CD8-positive, alpha-beta T cell (primary cell): ENCODE measurements at regions of chr6 and their contacts with region 1.

Region 1: GRCh38 chr6:125995972-125996580 is 9.7 kb downstream of the TRMT11 start:
- DNase-seq: peak; percentile 22 to 84 (median 69)
- ATAC-seq: peak; percentile 100
- H3K4me3 ChIP-seq: peak overlapping the region in 1 of 2 experiments; percentile 16
- H3K4me3 Mint-ChIP-seq: peak overlapping the region; percentile 76
- H3K27ac ChIP-seq: no peak overlapping the region
- H3K27ac Mint-ChIP-seq: no peak overlapping the region
- H3K4me1 ChIP-seq: no peaks in the 10 kb centered on the region
- H3K4me1 Mint-ChIP-seq: peaks cover 27% of the 10 kb centered on the region
- H3K27me3 ChIP-seq: no peaks in the 10 kb centered on the region
- H3K27me3 Mint-ChIP-seq: no peaks in the 10 kb centered on the region
- CTCF ChIP-seq: peak; percentile 99

Region 2: GRCh38 chr6:126170978-126171382 is 174.9 kb after region 1 on chr6:
- CTCF ChIA-PET with region 1: interaction called, 3 read pairs
- POLR2A ChIA-PET with region 1: no interaction called
- intact Hi-C with region 1: loop called (anchors 1 to 10 kb)
- DNase-seq: peak in 2 of 9 experiments; percentile 25 to 39
- ATAC-seq: no peak
- H3K4me3 ChIP-seq: no peak overlapping the region
- H3K4me3 Mint-ChIP-seq: no peak overlapping the region
- H3K27ac ChIP-seq: no peak overlapping the region
- H3K27ac Mint-ChIP-seq: no peak overlapping the region
- H3K4me1 ChIP-seq: no peaks in the 10 kb centered on the region
- H3K4me1 Mint-ChIP-seq: peaks cover 5% of the 10 kb centered on the region
- H3K27me3 ChIP-seq: no peaks in the 10 kb centered on the region
- H3K27me3 Mint-ChIP-seq: no peaks in the 10 kb centered on the region
- CTCF ChIP-seq: peak; percentile 28

Region 3: DNA sequence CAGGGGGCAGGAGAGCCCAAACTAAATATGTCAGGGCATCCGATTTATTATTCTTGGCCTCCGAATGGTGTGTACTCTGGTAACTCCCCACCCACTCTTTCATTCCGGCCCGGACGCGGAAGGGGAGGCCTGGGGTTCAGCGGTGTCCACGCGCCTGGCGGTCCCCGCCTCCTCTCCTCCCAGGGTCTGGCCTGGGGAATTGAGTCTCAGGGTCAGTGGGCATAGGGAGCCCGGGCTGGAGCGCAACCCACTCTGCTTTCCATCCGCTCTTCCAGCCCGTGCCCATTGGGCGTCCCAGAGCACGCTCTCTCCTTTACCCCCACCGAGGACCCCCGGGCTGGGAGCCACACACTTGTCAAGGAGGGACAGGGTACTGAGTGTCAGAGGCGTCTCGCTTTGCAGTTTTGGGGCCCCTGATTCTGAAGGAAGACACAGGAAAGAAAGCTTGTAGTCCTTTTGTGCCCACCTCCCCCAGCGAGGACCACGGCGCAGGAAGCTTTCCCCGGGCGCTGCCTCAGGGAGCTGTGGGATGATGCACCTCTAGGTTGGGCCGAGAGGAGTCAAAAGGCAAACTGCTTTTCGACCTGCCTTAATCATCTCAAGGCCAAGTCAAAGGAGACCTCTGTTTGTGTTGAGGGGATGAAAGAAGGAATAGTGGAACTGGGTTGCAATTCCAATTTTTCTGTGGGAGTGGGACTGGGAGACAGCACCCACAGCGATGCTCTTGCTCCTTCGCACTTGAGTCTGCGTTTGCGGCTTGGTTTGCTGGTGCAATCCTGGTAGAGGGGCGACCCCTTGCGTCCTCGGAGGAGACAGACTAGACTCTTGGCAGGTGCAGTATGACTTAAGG is 1124.9 kb after region 1 on chr6:
- CTCF ChIA-PET with region 1: no interaction called
- POLR2A ChIA-PET with region 1: no interaction called
- intact Hi-C with region 1: loop called in 1 of 2 experiments (anchors 5 kb)
- DNase-seq: peak in 8 of 9 experiments; percentile 12 to 59 (median 45)
- ATAC-seq: peak; percentile 36
- H3K4me3 ChIP-seq: no peak overlapping the region
- H3K4me3 Mint-ChIP-seq: peak overlapping the region; percentile 54
- H3K27ac ChIP-seq: no peak overlapping the region
- H3K27ac Mint-ChIP-seq: no peak overlapping the region
- H3K4me1 ChIP-seq: peaks cover 16% of the 10 kb centered on the region
- H3K4me1 Mint-ChIP-seq: peaks cover 17% of the 10 kb centered on the region
- H3K27me3 ChIP-seq: peaks cover 6 to 15% of the 10 kb centered on the region in 2 experiments
- H3K27me3 Mint-ChIP-seq: peaks cover 46% of the 10 kb centered on the region
- CTCF ChIP-seq: peak; percentile 25

Region 4: GRCh38 chr6:127539272-127539671 is 1543.2 kb after region 1 on chr6:
- CTCF ChIA-PET with region 1: no interaction called
- POLR2A ChIA-PET with region 1: no interaction called
- intact Hi-C with region 1: loop called in 1 of 2 experiments (anchors 5 kb)
- DNase-seq: peak in 1 of 9 experiments; percentile 35
- ATAC-seq: peak; percentile 48
- H3K4me3 ChIP-seq: no peak overlapping the region
- H3K4me3 Mint-ChIP-seq: no peak overlapping the region
- H3K27ac ChIP-seq: no peak overlapping the region
- H3K27ac Mint-ChIP-seq: no peak overlapping the region
- H3K4me1 ChIP-seq: no peaks in the 10 kb centered on the region
- H3K4me1 Mint-ChIP-seq: no peaks in the 10 kb centered on the region
- H3K27me3 ChIP-seq: no peaks in the 10 kb centered on the region
- H3K27me3 Mint-ChIP-seq: peaks cover 17% of the 10 kb centered on the region
- CTCF ChIP-seq: peak; percentile 69